Adrenal gland (tissue), 19 donors: ENCODE measurements at regions of chr4 and their contacts with region 1.

Region 1: GRCh38 chr4:21790438-21791029 is 158.0 kb downstream of the KCNIP4 start:
- DNase-seq: no peak
- H3K4me3 ChIP-seq: no peak overlapping the region
- H3K27ac ChIP-seq: no peak overlapping the region
- H3K4me1 ChIP-seq: no peaks in the 10 kb centered on the region
- H3K27me3 ChIP-seq: no peaks in the 10 kb centered on the region
- CTCF ChIP-seq: peak; percentile 17 to 56 (median 47)
- POLR2A ChIP-seq: no peak

Region 2: DNA sequence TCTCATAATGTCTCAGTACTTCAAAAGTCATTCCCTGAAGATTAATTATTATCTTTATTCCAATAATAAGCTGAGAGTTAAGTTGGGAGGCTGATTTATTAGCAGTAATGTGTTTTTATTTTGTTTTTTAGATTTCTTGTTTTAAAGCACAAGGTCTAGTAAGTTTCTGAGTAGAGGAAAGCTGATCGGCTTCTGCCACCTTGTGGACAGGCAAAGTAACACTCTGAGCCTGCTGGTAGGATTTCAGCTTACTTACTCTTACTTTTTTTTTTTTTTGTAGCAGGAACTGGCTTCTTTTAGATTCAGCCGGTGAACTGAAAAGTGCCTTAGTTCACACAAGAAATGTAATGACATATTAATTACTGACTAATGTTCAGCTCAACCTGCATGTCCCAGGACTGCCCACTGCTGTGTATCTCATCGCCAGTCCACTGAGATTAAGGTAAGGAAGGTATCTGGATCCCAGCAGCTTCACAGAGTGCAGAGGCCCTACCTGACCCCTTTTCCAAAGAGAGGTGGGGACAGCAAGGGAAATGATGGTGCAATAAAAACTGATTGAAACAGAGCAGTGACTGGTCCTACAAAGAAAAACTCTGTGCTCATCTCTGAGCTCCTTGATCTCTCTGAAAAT is 598.8 kb after region 1 on chr4:
- intact Hi-C with region 1: loop called (anchors 5 to 10 kb)
- DNase-seq: peak; percentile 44 to 77 (median 60)
- H3K4me3 ChIP-seq: no peak overlapping the region
- H3K27ac ChIP-seq: no peak overlapping the region
- H3K4me1 ChIP-seq: no peaks in the 10 kb centered on the region
- H3K27me3 ChIP-seq: no peaks in the 10 kb centered on the region
- CTCF ChIP-seq: peak; percentile 56 to 82 (median 70)
- POLR2A ChIP-seq: no peak